Motor neuron (in vitro differentiated cells): ENCODE measurements at regions of chr11 and their contacts with region 1.

Region 1: GRCh38 chr11:17722000-17722643 is 2.8 kb downstream of the MYOD1 start:
- ATAC-seq: peak in 3 of 8 experiments; percentile 47 to 61 (median 49)
- H3K4me3 ChIP-seq: no peak overlapping the region
- H3K27ac ChIP-seq: no peak overlapping the region
- H3K4me1 ChIP-seq: peaks cover 5 to 11% of the 10 kb centered on the region in 2 donors

Region 2: GRCh38 chr11:17598700-17599459 is 123.2 kb before region 1 on chr11:
- in situ Hi-C with region 1: loop called in 1 of 9 experiments (anchors 10 kb)
- ATAC-seq: peak; percentile 86 to 97 (median 95)
- H3K4me3 ChIP-seq: no peak overlapping the region
- H3K27ac ChIP-seq: no peak overlapping the region
- H3K4me1 ChIP-seq: peaks cover 0 to 8% of the 10 kb centered on the region in 2 donors